ENCODE measurements at regions of chr22 and their contacts with region 1.

Region 1: DNA sequence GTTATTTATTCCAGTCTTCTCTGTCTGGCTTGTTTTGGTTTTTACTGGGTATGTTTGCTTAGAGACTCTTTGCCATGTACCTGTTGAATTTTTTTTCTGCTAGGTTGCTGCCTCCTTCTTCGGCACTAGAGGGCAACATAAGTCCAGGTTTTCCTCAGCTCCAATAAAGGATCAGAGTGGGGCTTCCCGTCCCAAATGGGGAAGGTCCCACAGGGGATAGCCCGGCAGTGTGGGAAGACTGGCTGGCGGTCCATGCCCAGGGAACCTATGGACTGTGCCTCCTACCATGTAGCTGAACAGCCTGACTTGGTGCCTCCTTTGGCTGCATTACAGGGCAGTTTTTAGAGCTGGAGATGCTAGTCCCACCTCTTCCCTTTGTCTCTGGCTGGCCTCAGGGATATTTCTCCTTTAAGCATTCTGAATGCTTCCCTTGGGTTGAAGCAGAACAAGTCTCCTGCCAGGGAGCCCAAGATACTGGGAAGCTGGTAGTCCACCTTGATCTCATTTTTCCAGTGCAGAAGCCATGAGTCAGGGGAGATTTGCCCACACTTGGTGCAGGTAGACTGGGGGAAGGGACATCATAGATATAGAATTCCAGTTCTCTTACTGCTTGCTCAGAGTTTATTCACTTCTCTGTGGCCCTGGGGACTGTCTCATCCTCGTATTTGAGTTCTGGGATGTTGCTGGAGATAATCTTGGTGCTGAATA is 60.2 kb downstream of the BRD1 start:
- DNase-seq: peak in 3 of 5 donors; percentile 15 to 35 (median 25)
- H3K4me3 ChIP-seq: no peak overlapping the region
- H3K27ac ChIP-seq: no peak overlapping the region
- H3K4me1 ChIP-seq: peaks cover 27% of the 10 kb centered on the region
- H3K27me3 ChIP-seq: no peaks in the 10 kb centered on the region
- CTCF ChIP-seq: no peak
- EP300 ChIP-seq: no peak
- POLR2A ChIP-seq: no peak

Region 2: GRCh38 chr22:49693416-49693815 is 74.1 kb before region 1 on chr22:
- intact Hi-C with region 1: no loop called
- DNase-seq: peak in 1 of 5 donors; percentile 31
- H3K4me3 ChIP-seq: no peak overlapping the region
- H3K27ac ChIP-seq: no peak overlapping the region
- H3K4me1 ChIP-seq: no peaks in the 10 kb centered on the region
- H3K27me3 ChIP-seq: no peaks in the 10 kb centered on the region
- CTCF ChIP-seq: no peak
- EP300 ChIP-seq: no peak
- POLR2A ChIP-seq: no peak

Region 3: GRCh38 chr22:49812838-49813237 is 45.3 kb after region 1 on chr22:
- intact Hi-C with region 1: no loop called
- DNase-seq: no peak
- H3K4me3 ChIP-seq: no peak overlapping the region
- H3K27ac ChIP-seq: no peak overlapping the region
- H3K4me1 ChIP-seq: peaks cover 21% of the 10 kb centered on the region
- H3K27me3 ChIP-seq: no peaks in the 10 kb centered on the region
- CTCF ChIP-seq: no peak
- EP300 ChIP-seq: no peak
- POLR2A ChIP-seq: no peak

Region 4: GRCh38 chr22:49827853-49828598 is 60.5 kb after region 1 on chr22 and contains the start of gene BRD1:
- intact Hi-C with region 1: loop called in 1 of 4 experiments (anchors 10 kb)
- DNase-seq: peak; percentile 49 to 80 (median 60)
- H3K4me3 ChIP-seq: peak within 1 kb of the TSS; percentile 69
- H3K27ac ChIP-seq: peak within 1 kb of the TSS; percentile 87 to 97
- H3K4me1 ChIP-seq: peaks cover 25% of the 10 kb centered on the region
- H3K27me3 ChIP-seq: no peaks in the 10 kb centered on the region
- CTCF ChIP-seq: no peak
- EP300 ChIP-seq: no peak
- POLR2A ChIP-seq: no peak
- total RNA-seq, gene BRD1: 27.3 to 45.6 (median 40.2) TPM

Region 5: DNA sequence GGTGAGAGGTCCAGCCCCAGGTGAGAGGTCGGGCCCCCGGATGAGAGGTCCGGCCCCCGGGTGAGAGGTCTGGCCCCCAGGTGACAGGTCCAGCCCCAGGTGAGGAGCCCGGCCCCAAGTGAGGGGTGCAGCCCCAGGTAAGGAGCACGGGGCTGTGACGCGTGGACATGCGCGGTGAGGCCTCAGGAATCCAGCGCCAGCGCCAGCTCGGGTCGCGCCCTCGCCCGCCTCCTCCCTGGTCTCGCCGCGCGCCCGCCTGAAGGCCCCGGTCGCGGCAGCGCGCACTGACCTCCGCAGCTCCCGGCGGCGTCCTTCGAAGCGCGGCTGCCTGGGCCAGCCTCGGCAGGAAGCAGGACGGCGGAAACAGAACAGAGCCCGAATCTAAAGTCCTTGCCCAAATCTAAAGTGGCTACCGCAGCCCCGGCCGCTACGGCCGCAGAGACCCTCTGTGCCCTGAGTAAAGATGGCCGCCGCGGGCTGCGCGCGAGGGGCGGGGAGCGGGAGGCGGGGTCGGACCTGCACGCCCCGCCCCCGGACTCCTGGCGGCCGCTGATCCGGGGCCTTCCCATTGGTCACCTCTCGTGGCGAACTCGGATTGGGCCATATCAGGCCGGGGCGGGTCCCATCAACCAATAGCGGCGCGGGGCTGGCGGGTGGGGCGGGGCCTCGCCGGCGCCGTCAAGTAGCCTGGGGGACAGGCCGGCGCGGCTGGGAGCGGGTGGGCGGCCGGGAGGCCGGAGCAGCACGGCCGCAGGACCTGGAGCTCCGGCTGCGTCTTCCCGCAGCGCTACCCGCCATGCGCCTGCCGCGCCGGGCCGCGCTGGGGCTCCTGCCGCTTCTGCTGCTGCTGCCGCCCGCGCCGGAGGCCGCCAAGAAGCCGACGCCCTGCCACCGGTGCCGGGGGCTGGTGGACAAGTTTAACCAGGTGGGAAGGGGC is 150.7 kb after region 1 on chr22 and contains the starts of genes ALG12 and CRELD2:
- intact Hi-C with region 1: loop called in 1 of 4 experiments (anchors 10 kb)
- DNase-seq: peak; percentile 97 to 98 (median 97)
- H3K4me3 ChIP-seq: peak within 1 kb of the TSS; percentile 54
- H3K27ac ChIP-seq: peak within 1 kb of the TSS; percentile 74 to 92
- H3K4me1 ChIP-seq: peaks cover 7% of the 10 kb centered on the region
- H3K27me3 ChIP-seq: no peaks in the 10 kb centered on the region
- CTCF ChIP-seq: peak in 2 of 3 donors; percentile 13 to 29
- EP300 ChIP-seq: no peak
- POLR2A ChIP-seq: peak; percentile 49
- total RNA-seq, gene ALG12: 10.5 to 19.2 (median 15.5) TPM
- total RNA-seq, gene CRELD2: 12.9 to 53.4 (median 27.8) TPM

Region 6: DNA sequence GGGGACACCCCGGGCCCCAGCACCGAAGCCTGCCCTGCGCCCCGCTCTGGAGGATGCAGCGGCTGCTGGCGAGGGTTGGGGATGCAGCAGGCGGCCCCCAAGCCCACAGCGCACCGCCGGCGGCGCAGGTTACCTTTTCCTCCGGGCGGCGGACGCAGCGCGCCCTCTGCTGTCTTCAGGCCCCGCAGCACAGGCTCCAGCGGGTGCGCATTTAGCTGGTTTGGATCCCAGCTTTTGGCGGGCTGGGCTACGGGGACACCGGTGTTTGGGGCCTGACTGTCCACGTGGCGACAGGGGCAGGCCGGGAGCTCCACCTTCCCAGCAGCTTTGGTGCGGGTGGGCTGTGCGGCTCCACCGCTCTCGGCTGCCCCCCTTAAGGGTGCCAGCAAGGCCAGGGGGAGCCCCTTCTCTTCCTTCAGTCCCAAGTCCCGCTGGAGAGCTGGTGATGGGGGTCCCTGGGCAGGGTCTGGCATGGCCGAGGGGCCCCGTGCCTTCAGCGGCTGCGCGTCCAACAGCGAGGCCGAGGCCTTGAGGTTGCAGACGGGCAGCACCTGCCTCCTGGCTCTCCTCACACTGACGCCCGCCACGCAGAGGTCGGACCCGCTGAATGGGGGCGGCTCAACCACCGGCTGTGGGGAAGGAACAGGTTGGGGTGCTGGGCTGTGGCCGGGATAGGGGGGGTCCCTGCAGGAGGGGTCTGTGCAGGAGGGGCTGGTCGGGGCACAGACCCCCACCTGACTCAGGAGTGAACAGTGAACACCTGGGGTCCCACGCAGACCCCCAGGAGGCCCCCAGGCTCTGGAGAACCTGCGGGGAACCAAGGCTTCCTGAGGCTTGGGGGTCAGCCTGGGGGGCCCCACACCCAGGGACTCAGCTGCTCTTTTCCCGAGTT is 263.0 kb after region 1 on chr22:
- intact Hi-C with region 1: loop called in 2 of 4 experiments (anchors 5 kb)
- DNase-seq: peak; percentile 62 to 86 (median 72)
- H3K4me3 ChIP-seq: no peak overlapping the region
- H3K27ac ChIP-seq: no peak overlapping the region
- H3K4me1 ChIP-seq: no peaks in the 10 kb centered on the region
- H3K27me3 ChIP-seq: no peaks in the 10 kb centered on the region
- CTCF ChIP-seq: peak; percentile 74 to 94 (median 89)
- EP300 ChIP-seq: no peak
- POLR2A ChIP-seq: no peak

Measured in ovary (tissue), 10 donors.